Activated naive CD4-positive, alpha-beta T cell treated with anti-CD3 and anti-CD28 coated beads for 36 hours (primary cell): ENCODE measurements at regions of chr17 and their contacts with region 1.

Region 1: DNA sequence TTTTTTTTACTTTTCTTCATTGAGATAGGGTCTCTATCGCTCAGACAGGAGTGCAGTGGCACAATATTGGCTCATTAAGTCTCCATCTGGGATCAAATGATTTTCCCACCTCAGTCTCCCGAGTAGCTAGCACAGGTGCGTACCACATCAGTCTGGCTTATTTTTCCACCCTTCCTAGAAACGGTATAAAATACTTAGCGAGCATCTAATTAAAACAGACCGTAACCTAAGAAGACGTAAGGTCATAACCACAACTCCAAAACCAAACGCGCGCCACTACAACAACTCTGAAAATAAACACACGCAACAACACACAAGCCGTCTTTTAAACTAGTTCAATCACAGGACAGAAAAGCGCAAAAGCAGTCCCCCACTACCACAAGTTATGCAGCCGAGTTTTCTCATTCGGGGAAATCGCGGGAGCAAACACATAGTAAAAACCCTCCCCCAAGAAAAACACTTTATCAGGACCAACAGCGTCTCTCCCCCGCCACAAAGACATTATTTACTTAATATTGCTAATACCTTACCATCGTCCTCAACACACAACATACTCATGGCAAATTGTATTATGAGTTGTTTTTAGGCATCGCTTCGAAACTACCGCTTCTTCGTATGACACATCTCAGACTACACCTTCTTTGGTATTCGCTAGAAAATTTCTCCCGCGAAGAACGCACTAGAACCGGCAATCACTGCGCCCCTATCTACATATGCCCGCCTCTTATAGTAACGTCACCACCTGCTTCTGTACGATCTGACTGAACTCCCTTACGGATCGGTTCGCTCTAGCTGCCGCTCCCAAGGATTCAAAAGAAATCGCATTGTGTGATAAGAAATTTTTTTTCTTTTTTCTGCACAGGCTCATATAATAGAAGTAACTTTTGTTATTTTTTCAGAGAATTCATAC is 32.8 kb downstream of the TEX14 start:
- DNase-seq: peak; percentile 88
- H3K4me3 Mint-ChIP-seq: peak overlapping the region; percentile 69
- H3K27ac Mint-ChIP-seq: peak overlapping the region; percentile 98
- H3K4me1 Mint-ChIP-seq: peaks cover 16% of the 10 kb centered on the region
- H3K27me3 Mint-ChIP-seq: peaks cover 8% of the 10 kb centered on the region

Region 2: GRCh38 chr17:58436805-58437239 is 222.2 kb before region 1 on chr17:
- CTCF ChIA-PET with region 1: no interaction called
- intact Hi-C with region 1: no loop called
- DNase-seq: no peak
- H3K4me3 Mint-ChIP-seq: no peak overlapping the region
- H3K27ac Mint-ChIP-seq: no peak overlapping the region
- H3K4me1 Mint-ChIP-seq: no peaks in the 10 kb centered on the region
- H3K27me3 Mint-ChIP-seq: no peaks in the 10 kb centered on the region

Region 3: DNA sequence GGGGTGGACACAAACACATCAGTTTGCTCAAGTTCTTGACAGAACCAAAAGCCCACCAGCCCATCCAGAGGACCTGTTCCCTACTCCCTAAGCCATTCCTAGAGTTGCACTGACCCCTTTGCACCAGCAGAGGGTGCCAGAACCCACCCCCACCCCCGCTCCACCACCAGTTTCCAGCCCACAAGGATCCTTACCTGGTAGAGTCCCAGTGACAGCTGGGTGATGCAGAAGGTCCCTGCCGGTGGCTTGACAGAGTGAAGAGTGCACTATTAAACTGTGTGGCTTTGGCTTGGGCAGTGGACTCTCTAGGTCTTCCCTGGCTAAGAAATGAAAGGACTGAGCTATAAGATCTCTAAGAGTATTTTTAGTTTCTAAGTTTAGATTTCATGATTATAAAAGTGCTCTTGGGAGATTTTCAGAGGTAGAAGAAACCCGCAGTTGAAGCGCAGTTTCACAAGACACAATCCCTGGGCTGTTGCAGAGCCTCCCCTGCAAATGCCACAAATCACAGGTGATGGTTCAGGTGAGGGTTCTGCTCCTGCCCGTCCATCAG is 71.3 kb before region 1 on chr17:
- CTCF ChIA-PET with region 1: interaction called, 4 read pairs
- intact Hi-C with region 1: loop called (anchors 1 kb)
- DNase-seq: peak; percentile 76
- H3K4me3 Mint-ChIP-seq: no peak overlapping the region
- H3K27ac Mint-ChIP-seq: no peak overlapping the region
- H3K4me1 Mint-ChIP-seq: peaks cover 2% of the 10 kb centered on the region
- H3K27me3 Mint-ChIP-seq: no peaks in the 10 kb centered on the region

Region 4: GRCh38 chr17:58692239-58693055 is 33.4 kb after region 1 on chr17 and contains the start of gene RAD51C:
- CTCF ChIA-PET with region 1: interaction called, 3 read pairs
- intact Hi-C with region 1: loop called (anchors 1 kb)
- DNase-seq: peak; percentile 92
- H3K4me3 Mint-ChIP-seq: peak within 1 kb of the TSS; percentile 91
- H3K27ac Mint-ChIP-seq: peak within 1 kb of the TSS; percentile 93
- H3K4me1 Mint-ChIP-seq: peaks cover 31% of the 10 kb centered on the region
- H3K27me3 Mint-ChIP-seq: no peaks in the 10 kb centered on the region
- total RNA-seq, gene RAD51C: 57.7 to 64.6 TPM

Region 5: GRCh38 chr17:58703137-58703972 is 44.3 kb after region 1 on chr17:
- CTCF ChIA-PET with region 1: no interaction called
- intact Hi-C with region 1: loop called (anchors 2 kb)
- DNase-seq: peak; percentile 26
- H3K4me3 Mint-ChIP-seq: no peak overlapping the region
- H3K27ac Mint-ChIP-seq: peak overlapping the region; percentile 71
- H3K4me1 Mint-ChIP-seq: peaks cover 30% of the 10 kb centered on the region
- H3K27me3 Mint-ChIP-seq: no peaks in the 10 kb centered on the region

Region 6: DNA sequence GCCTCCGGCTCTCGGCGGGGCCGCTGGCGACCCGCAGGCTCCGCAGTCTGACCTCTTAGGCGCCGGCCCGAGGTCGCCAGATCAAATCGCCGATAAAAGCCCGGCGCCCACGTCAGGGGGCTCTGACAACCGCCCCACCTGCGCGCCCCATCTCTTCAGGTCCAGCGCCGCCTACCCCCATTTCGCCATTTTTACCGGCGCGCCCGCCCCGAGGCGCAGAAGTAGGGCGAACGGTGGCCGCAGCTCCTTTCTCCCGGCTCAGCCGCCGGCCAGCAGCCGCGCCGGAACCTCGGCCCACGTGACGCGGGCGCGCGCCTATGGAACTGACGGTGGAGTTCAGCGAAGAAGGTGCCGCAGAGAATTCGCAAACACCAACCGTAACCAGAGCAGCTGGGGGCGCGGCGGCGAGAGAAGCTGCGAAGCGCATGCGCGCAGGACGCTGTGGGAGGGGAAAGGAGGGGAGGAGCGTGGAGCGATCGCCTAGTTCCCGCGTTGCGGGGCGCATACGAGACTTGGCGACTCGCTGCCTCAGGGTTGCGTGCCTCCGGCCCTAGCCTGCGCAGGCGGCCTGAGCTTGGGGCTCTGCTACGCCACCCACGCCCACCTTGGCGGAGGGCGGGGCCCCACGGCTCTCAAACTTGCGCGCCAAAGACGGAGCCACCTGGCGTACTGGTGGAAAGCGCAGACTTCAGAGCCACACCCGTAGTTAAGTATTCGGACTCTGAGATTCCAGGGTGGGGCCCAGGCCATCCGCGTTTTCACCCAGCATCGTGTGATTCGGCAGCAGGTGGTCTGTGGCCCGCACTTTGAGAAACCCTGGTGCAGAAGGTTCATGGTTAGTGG is 447.6 kb after region 1 on chr17 and contains the start of gene TRIM37:
- CTCF ChIA-PET with region 1: no interaction called
- intact Hi-C with region 1: loop called (anchors 2 kb)
- DNase-seq: peak; percentile 99
- H3K4me3 Mint-ChIP-seq: peak within 1 kb of the TSS; percentile 96
- H3K27ac Mint-ChIP-seq: peak within 1 kb of the TSS; percentile 89
- H3K4me1 Mint-ChIP-seq: peaks cover 54% of the 10 kb centered on the region
- H3K27me3 Mint-ChIP-seq: no peaks in the 10 kb centered on the region
- total RNA-seq, gene TRIM37: 19.9 to 24.1 TPM